Dendritic cell treated with granulocyte-macrophage colony-stimulating factor and Interleukin-4, amounts not matched to agents 40 ng/mL and 50 ng/mL, for 4 days (primary cell): ENCODE measurements at regions of chr13 and their contacts with region 1.

Region 1: GRCh38 chr13:89363144-89363543 is 1692.0 kb downstream of the SLITRK5 start:
- H3K4me3 Mint-ChIP-seq: no peak overlapping the region
- H3K27ac Mint-ChIP-seq: no peak overlapping the region
- H3K4me1 Mint-ChIP-seq: no peaks in the 10 kb centered on the region
- H3K27me3 Mint-ChIP-seq: no peaks in the 10 kb centered on the region

Region 2: DNA sequence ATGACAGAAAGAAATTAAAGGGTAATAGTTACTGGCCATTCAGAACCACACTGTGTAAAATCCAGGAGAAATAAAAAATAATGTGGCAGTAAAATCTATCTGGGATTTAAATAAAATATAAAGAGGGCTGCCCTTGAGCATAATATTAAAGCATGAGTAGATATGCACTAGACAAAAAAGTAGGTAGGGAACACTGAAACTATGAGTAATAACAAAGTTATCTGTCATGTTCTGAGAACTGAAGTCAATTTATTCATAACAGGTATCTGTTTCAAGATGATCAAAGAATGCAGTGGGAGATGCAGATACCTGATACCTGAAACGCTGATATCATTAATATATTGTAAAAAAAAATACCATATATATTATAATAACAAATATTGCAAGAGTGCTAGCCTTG is 20.0 kb before region 1 on chr13:
- intact Hi-C with region 1: no loop called
- H3K4me3 Mint-ChIP-seq: no peak overlapping the region
- H3K27ac Mint-ChIP-seq: no peak overlapping the region
- H3K4me1 Mint-ChIP-seq: no peaks in the 10 kb centered on the region
- H3K27me3 Mint-ChIP-seq: no peaks in the 10 kb centered on the region

Region 3: DNA sequence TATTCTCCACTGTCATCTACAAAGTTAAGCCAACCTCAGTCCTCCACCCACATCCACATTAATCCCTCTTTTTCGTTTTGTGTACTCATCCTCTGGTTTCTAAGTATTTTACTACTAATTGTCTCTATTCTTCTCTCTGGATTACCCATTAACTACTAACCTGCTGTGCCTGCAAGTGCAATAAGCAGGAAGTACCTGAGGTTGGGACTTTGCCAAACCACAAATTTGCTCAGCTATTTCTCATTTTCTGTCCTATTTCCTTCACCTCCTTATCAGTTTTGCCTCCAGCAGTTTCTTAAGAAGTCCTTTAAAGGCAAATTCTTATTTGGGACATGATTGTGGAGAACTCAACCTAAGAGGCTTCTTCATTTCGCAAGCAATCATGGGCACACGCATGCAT is 17.0 kb after region 1 on chr13:
- intact Hi-C with region 1: loop called (anchors 1 kb)
- H3K4me3 Mint-ChIP-seq: no peak overlapping the region
- H3K27ac Mint-ChIP-seq: no peak overlapping the region
- H3K4me1 Mint-ChIP-seq: no peaks in the 10 kb centered on the region
- H3K27me3 Mint-ChIP-seq: no peaks in the 10 kb centered on the region